ENCODE measurements at regions of chr16 and their contacts with region 1.

Region 1: DNA sequence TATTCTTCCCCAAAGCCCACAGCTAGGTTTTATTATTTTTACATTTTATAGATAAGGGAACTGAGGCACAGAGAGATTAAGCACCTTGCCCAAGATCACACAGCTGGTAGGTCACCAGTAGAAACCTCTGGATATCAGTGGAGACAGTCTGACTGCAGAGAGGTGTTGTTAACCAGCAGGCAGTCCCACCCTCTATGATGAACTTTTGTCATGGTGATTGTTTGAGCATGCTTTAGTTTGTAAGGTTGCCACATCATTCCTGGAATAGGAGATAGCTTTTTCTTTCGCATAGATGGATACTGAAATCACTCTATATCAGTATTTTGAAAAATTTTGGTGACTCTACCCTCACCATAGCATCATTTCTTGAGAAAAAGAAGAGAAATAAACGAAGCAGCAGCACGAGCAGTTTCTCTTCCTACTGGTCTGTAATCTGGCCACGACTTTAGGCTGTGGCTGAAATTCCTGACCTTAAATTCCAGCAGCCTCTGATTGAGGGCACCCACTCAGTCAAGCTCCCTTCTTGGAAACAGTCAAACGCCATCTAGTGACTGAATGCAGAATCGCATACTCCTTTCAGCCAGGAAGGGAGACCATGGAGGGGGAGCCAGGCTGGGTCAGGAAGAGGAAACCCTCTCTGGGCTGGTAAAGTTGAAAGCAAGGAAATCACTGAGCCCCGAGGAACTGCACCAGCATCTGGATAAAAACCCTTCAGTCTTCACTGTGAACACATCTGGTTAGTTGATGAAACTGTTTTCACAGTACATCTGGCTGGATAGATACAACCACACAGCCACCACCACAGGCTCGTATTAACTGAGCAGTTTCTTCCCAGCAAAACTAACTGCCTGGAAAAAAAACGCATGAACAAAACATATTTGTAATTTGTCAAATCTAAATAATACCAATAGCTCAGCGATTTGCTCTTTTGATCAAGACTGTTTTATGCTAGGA is 108.4 kb upstream of the XYLT1 start:
- DNase-seq: peak; percentile 40
- H3K4me3 ChIP-seq: no peak overlapping the region
- H3K27me3 ChIP-seq: 0 out of 2 replicates have a peak, but pooled peaks cover 1% of the 10 kb centered on the region
- CTCF ChIP-seq: peak; percentile 96

Region 2: DNA sequence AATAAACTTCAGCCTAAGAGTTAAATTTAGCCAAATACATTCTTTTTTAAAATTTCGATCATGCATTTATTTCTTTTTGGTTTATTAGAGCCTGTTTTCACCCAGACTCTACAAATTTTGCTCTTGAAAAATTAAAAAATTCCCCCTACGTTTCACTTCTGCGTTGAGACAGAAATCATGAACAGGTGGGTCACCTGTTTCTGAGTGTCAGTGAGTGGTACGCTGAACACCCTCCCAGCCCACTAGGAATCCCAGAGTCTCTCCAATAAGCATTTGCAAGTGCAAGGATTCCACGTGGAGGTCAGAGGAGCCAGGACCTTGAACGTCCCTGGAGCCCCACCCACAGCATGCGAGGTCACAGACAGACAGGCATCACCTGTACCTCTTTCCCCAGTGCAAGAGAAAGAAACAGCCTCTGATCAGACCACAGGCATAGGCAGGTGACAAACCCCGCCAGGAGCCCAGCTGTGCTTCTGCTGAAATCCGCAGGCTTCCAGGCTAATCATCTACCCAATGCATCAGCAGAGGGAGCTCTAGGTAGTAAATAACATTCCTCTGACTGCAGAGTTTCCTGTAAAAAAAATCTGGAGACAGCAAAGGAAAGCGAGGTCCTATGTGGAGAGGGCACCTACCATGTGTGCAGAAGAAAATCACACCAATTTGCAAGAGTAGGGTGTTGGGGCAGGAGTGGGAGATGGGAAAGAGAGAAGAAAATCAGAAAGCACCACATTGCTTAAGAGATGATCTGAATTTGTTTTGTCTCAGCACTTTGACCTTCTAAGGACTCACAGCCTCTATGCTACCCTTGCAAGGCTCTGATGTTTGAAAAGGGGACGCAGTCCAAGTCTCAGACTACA is 102.6 kb before region 1 on chr16:
- CTCF ChIA-PET with region 1: interaction called, 133 read pairs
- POLR2A ChIA-PET with region 1: no interaction called
- DNase-seq: no peak
- H3K4me3 ChIP-seq: no peak overlapping the region
- H3K27me3 ChIP-seq: peaks cover 2% of the 10 kb centered on the region; the same call in 1 of the 2 replicates
- CTCF ChIP-seq: peak; percentile 72

Region 3: GRCh38 chr16:17511340-17511739 is 67.9 kb before region 1 on chr16:
- CTCF ChIA-PET with region 1: interaction called, 11 read pairs
- POLR2A ChIA-PET with region 1: no interaction called
- DNase-seq: peak; percentile 87
- H3K4me3 ChIP-seq: no peak overlapping the region
- H3K27me3 ChIP-seq: no peaks in the 10 kb centered on the region
- CTCF ChIP-seq: no peak

Region 4: GRCh38 chr16:17590719-17591654 is 11.8 kb after region 1 on chr16:
- CTCF ChIA-PET with region 1: interaction called, 10 read pairs
- POLR2A ChIA-PET with region 1: no interaction called
- DNase-seq: no peak
- H3K4me3 ChIP-seq: no peak overlapping the region
- H3K27me3 ChIP-seq: no peaks in the 10 kb centered on the region; the same call in 1 of the 2 replicates
- CTCF ChIP-seq: no peak